B cell (primary cell): ENCODE measurements at regions of chr1 and their contacts with region 1.

Region 1: DNA sequence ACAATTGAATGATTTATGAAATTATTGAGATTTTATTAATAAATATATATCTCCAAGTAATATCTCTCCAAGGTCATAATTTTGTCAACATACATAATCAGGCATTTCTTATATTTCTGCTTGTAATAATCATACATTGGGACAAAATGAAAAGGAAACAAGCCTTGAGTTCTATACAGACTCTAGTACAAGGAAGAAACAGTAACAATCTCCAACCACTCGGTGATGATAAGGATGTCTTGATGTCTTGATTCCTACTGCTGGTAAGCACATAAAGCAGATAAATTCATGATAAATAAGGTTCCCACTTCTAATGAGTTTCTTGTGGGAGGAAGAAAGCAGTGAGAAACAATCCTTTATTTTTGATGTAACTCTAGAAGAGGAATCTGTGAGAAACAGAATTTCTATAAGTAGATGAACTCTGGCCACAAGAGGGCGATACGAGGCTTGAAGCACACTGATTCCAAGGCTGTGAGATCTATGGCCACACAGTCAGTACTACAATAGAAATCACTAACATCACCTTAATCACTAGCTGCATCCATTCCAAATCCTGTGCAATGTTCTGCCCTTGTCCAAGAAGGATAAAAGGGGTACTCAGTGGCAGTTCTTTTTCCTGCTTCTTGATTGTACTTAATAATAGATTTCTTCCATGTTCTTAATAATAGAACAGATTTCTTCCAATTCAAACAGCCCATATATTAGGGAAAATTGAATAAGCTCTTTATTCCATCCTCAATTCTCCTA is 41.4 kb upstream of the LRRC8B start:
- DNase-seq: peak; percentile 75
- ATAC-seq: peak; percentile 62
- H3K4me3 ChIP-seq: no peak overlapping the region
- H3K4me3 Mint-ChIP-seq: no peak overlapping the region
- H3K27ac ChIP-seq: no peak overlapping the region
- H3K27ac Mint-ChIP-seq: no peak overlapping the region
- H3K4me1 ChIP-seq: no peaks in the 10 kb centered on the region
- H3K4me1 Mint-ChIP-seq: no peaks in the 10 kb centered on the region
- H3K27me3 ChIP-seq: no peaks in the 10 kb centered on the region
- H3K27me3 Mint-ChIP-seq: no peaks in the 10 kb centered on the region
- CTCF ChIP-seq: peak; percentile 79

Region 2: DNA sequence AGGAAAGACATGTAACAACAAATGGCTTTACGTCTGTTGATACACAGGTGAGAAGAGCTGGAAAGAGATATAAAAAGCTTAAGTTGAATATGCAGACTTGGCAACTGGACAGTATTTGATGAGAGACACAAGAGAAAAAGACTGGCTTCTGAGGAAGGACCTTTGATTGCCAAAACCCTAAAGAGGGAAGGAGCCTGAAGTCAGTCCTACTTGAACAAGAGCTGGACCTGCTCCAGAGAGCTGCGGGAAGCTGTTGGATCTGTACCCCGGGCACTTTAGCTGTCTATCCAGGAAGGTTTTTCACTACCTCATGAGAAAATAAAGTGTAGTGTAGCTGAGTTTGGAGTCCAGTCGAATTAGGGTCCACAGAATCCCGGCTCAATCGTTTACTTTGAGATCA is 16.1 kb after region 1 on chr1:
- CTCF ChIA-PET with region 1: interaction called, 10 read pairs
- POLR2A ChIA-PET with region 1: no interaction called
- intact Hi-C with region 1: no loop called
- DNase-seq: no peak
- ATAC-seq: no peak
- H3K4me3 ChIP-seq: no peak overlapping the region
- H3K4me3 Mint-ChIP-seq: no peak overlapping the region
- H3K27ac ChIP-seq: no peak overlapping the region
- H3K27ac Mint-ChIP-seq: no peak overlapping the region
- H3K4me1 ChIP-seq: no peaks in the 10 kb centered on the region
- H3K4me1 Mint-ChIP-seq: no peaks in the 10 kb centered on the region
- H3K27me3 ChIP-seq: no peaks in the 10 kb centered on the region
- H3K27me3 Mint-ChIP-seq: no peaks in the 10 kb centered on the region
- CTCF ChIP-seq: no peak

Region 3: DNA sequence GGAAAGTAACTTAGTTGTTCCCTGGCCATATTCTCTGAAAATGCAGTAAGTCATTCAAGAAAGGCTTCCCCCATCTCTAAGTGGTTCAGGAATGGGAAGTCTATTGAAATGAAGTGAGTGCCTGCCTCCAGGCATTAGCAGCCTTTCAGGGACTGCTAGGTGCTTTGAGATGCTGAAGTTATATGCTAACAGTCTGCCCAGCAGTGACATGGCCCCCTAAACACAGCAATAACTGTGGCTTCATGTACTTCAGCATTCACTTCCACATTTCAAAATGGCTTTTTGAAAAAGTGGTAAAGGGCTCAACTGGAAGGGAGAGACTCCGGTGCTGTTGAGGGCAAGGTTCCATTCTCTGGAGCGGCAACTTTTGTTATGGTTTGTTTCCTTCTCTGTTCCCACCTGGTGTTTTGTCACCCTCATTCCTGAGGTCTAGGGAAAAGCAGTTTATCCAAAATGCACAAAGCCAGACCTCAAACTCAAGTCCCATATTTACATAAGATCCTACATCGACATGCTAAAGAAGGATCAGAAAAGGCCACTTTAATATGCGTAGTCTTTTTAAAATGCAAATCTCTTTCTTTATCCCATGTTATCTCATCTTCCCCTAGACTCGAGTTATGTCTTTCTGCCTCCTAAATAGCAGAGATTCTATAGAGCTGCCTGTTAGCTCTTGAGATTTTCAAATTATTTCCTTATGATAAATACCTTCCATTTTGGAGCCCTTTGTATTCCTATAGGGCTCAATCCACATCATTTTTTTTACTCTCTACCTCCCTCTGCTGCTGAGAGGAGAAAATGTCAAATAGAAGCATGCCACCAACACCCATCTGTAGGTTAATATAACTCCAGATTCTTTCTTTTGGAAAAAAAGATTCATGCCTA is 115.5 kb after region 1 on chr1:
- CTCF ChIA-PET with region 1: interaction called, 67 read pairs
- POLR2A ChIA-PET with region 1: no interaction called
- intact Hi-C with region 1: loop called (anchors 1 kb)
- DNase-seq: peak; percentile 62
- ATAC-seq: peak; percentile 70
- H3K4me3 ChIP-seq: no peak overlapping the region
- H3K4me3 Mint-ChIP-seq: no peak overlapping the region
- H3K27ac ChIP-seq: no peak overlapping the region
- H3K27ac Mint-ChIP-seq: peak overlapping the region; percentile 16
- H3K4me1 ChIP-seq: no peaks in the 10 kb centered on the region
- H3K4me1 Mint-ChIP-seq: peaks cover 4% of the 10 kb centered on the region
- H3K27me3 ChIP-seq: no peaks in the 10 kb centered on the region
- H3K27me3 Mint-ChIP-seq: no peaks in the 10 kb centered on the region
- CTCF ChIP-seq: peak; percentile 86

Region 4: DNA sequence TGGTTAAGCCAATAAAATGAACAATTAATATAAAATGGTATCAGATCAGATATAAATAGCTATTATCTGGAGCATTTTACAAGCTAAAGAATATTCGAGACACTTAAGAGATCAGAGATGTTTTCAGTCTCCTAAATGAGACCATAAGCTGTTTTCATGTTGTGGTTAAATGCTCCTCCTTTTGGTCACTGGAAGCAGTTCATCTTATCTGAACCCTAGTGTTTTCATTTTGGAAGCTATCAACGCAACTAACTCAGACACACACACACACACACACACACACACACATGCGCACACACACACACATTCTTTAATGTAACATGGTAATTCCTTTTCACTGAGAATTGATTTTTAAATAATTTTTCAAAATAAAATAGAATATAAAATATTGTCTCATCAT is 139.7 kb after region 1 on chr1:
- CTCF ChIA-PET with region 1: interaction called, 13 read pairs
- POLR2A ChIA-PET with region 1: no interaction called
- intact Hi-C with region 1: no loop called
- DNase-seq: no peak
- ATAC-seq: no peak
- H3K4me3 ChIP-seq: no peak overlapping the region
- H3K4me3 Mint-ChIP-seq: no peak overlapping the region
- H3K27ac ChIP-seq: no peak overlapping the region
- H3K27ac Mint-ChIP-seq: no peak overlapping the region
- H3K4me1 ChIP-seq: peaks cover 2 to 6% of the 10 kb centered on the region in 2 donors
- H3K4me1 Mint-ChIP-seq: peaks cover 12% of the 10 kb centered on the region
- H3K27me3 ChIP-seq: no peaks in the 10 kb centered on the region
- H3K27me3 Mint-ChIP-seq: no peaks in the 10 kb centered on the region
- CTCF ChIP-seq: no peak

Region 5: DNA sequence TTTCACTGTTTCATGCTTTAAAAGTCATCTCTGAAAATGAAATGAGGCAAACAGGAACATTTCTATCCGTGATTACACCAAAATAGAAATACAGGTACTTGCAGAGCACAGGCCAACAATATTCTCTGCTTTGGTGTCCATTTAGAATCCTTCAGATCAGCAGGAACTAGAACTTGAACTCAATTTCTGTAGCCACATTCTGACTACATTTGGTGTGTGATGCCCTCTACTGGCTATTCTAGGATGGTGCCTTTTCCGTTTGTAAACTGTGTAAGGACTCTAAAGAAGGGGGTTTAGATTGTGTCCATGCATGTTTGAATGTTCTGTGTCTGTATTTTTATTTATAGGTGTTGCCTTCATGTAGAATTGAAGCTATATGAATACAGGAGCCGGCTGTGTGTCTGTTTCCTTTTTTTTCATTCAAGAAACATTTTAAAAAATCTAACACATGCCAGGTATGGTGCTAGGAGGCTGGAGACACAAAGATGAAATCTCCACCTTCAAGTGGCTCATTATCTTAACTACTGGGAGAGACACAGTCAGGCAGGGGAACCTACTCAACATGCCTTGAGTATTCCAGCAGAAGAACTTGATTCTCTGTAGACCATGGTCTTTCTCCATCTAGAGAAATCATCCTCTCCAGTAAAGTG is 504.1 kb after region 1 on chr1:
- CTCF ChIA-PET with region 1: interaction called, 12 read pairs
- POLR2A ChIA-PET with region 1: no interaction called
- intact Hi-C with region 1: loop called (anchors 2 kb)
- DNase-seq: peak; percentile 76
- ATAC-seq: peak; percentile 93
- H3K4me3 ChIP-seq: no peak overlapping the region
- H3K4me3 Mint-ChIP-seq: no peak overlapping the region
- H3K27ac ChIP-seq: no peak overlapping the region
- H3K27ac Mint-ChIP-seq: no peak overlapping the region
- H3K4me1 ChIP-seq: no peaks in the 10 kb centered on the region
- H3K4me1 Mint-ChIP-seq: no peaks in the 10 kb centered on the region
- H3K27me3 ChIP-seq: no peaks in the 10 kb centered on the region
- H3K27me3 Mint-ChIP-seq: no peaks in the 10 kb centered on the region
- CTCF ChIP-seq: peak; percentile 94